Activated CD8-positive, alpha-beta T cell treated with anti-CD3 and anti-CD28 coated beads for 36 hours (primary cell): ENCODE measurements at regions of chr18 and their contacts with region 1.

Region 1: DNA sequence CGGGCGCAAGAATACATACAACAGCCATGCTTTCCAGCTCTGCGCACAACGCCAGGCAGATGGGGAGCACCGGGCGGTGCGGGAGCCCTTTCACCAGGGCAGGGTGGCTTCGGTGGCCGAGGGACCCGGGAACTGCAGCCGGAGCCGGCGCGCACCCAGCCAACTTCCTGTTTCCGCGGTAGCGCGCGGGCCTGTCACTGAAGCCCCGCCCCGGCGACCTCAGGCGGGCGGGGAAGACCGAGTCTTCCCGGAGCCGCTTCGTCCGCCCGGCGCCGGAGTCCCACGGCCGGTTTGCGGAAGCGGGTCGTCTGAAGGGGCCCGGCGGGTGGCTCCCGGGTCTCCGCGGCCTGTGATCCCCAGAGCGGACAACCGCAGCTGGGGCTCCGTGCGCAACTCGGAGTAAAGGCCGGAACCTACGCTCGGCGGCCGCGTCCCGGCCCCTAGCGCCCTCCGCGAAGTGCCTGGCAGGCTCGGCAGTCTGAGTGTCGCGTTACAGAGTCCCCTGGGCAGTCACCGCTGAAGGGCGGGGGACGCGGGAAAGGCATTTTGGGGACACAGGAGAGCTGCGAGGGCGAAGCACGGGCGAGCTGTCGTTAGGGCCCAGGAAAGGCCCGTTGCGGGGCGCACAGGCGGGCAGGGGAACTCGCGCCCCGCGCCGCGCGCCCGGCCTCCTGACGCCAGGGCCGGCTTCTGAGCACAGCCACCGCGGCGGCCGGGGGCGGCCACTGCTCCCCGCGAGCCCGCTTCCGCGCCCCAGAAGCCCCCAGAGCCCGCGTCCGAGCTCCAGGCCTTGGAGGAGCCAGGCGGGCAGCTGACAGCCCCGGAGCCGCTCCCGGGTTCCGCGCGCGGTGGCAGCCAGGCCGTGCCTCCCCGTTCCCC is at the start of gene MPPE1:
- DNase-seq: peak; percentile 90
- ATAC-seq: peak; percentile 95
- H3K4me3 Mint-ChIP-seq: peak within 1 kb of the TSS; percentile 86
- H3K27ac Mint-ChIP-seq: peak within 1 kb of the TSS; percentile 89
- H3K4me1 Mint-ChIP-seq: peaks cover 20% of the 10 kb centered on the region
- H3K27me3 Mint-ChIP-seq: no peaks in the 10 kb centered on the region
- CTCF ChIP-seq: no peak
- total RNA-seq, gene MPPE1: 21.7 to 22.4 TPM

Region 2: GRCh38 chr18:11851146-11851805 is 57.1 kb before region 1 on chr18 and contains the start of gene CHMP1B:
- CTCF ChIA-PET with region 1: no interaction called
- POLR2A ChIA-PET with region 1: interaction called, 4 read pairs
- intact Hi-C with region 1: loop called (anchors 2 kb)
- DNase-seq: peak; percentile 99
- ATAC-seq: peak; percentile 93
- H3K4me3 Mint-ChIP-seq: peak within 1 kb of the TSS; percentile 93
- H3K27ac Mint-ChIP-seq: peak within 1 kb of the TSS; percentile 98
- H3K4me1 Mint-ChIP-seq: peaks cover 25% of the 10 kb centered on the region
- H3K27me3 Mint-ChIP-seq: no peaks in the 10 kb centered on the region
- CTCF ChIP-seq: no peak
- total RNA-seq, gene CHMP1B: 24.8 to 25.8 TPM

Region 3: GRCh38 chr18:11880586-11881304 is 27.7 kb before region 1 on chr18:
- CTCF ChIA-PET with region 1: no interaction called
- POLR2A ChIA-PET with region 1: no interaction called
- intact Hi-C with region 1: no loop called
- DNase-seq: no peak
- ATAC-seq: no peak
- H3K4me3 Mint-ChIP-seq: no peak overlapping the region
- H3K27ac Mint-ChIP-seq: no peak overlapping the region
- H3K4me1 Mint-ChIP-seq: no peaks in the 10 kb centered on the region
- H3K27me3 Mint-ChIP-seq: no peaks in the 10 kb centered on the region
- CTCF ChIP-seq: no peak